Right cardiac atrium (tissue), 5 donors: ENCODE measurements at regions of chr22 and their contacts with region 1.

Region 1: GRCh38 chr22:46079861-46080821 is 70.2 kb upstream of the PPARA start:
- DNase-seq: peak; percentile 89 to 91 (median 91)
- ATAC-seq: peak; percentile 74 to 75
- H3K4me3 ChIP-seq: peak overlapping the region; percentile 60
- H3K27ac ChIP-seq: peak overlapping the region; percentile 94
- H3K4me1 ChIP-seq: peaks cover 22% of the 10 kb centered on the region
- H3K27me3 ChIP-seq: no peaks in the 10 kb centered on the region

Region 2: GRCh38 chr22:46033256-46034200 is 46.6 kb before region 1 on chr22:
- intact Hi-C with region 1: no loop called
- DNase-seq: peak in 1 of 3 donors; percentile 15
- ATAC-seq: no peak
- H3K4me3 ChIP-seq: no peak overlapping the region
- H3K27ac ChIP-seq: no peak overlapping the region
- H3K4me1 ChIP-seq: peaks cover 5% of the 10 kb centered on the region
- H3K27me3 ChIP-seq: no peaks in the 10 kb centered on the region

Region 3: DNA sequence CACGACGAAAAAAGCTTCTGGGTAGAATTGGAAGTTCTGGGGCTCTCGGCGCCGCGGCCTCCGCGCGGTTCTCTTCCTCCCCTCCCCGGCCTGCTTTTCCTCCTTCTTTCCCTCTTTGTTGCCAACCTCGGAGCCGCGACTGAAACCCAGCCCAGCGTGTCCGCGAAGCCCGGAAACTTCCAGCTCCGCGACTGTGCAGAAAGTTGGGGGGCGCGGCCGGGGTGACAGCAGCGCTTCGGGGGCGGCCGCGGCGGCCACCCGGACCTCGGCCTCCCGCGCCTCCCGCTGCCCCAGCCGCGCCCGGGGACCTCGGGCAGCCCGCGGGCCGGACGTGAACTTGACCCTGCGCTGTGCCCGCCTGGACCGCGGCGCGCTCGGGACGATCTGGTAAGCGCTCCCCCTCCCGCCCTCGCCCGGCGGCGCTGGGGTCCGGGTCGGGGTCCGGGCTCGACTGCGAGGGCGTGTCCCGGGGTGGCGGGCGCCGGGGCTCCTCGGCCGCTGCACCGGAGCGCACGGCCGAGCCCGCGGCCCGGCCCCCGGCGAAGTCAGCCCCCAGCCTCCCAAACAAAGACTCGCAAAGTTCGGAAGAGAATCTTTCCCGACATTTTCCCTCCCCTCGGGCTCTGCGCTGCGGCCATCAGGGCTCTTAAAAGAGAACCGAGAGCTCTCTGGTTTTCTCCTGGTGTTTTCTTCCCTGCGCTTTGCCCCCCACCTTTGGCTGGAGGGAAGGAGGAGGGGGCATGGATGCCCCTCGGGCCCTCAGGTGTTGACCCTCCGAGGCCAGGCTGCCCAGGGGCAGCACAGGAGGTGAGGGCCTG is 35.3 kb before region 1 on chr22:
- intact Hi-C with region 1: loop called in 1 of 4 experiments (anchors 5 kb)
- DNase-seq: peak; percentile 54 to 84 (median 82)
- ATAC-seq: peak; percentile 30 to 31
- H3K4me3 ChIP-seq: peak overlapping the region; percentile 61
- H3K27ac ChIP-seq: peak overlapping the region; percentile 94
- H3K4me1 ChIP-seq: peaks cover 16% of the 10 kb centered on the region
- H3K27me3 ChIP-seq: no peaks in the 10 kb centered on the region

Region 4: DNA sequence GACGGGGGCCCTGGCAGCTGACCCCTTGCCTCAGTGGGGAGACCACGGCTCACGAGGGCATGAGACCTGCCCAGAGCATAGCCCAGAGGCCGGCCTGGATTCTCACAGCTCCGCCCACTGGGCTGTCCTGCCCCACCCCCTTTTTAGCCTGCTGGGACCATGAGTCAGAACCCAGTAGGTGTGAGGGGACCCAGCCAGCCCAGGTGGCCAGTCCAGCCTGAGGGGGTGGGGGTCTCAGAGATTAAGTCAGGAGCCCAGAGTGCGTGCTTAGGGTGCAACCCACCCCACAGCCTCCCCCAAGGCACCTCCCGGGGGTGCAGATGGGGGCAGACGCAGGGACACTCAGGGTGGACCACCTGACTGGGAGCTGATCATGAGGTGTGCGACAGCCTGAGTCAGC is 30.1 kb after region 1 on chr22:
- intact Hi-C with region 1: loop called in 1 of 4 experiments (anchors 5 kb)
- DNase-seq: peak in 1 of 3 donors; percentile 62
- ATAC-seq: no peak
- H3K4me3 ChIP-seq: no peak overlapping the region
- H3K27ac ChIP-seq: peak overlapping the region; percentile 19
- H3K4me1 ChIP-seq: peaks cover 25% of the 10 kb centered on the region
- H3K27me3 ChIP-seq: no peaks in the 10 kb centered on the region